ENCODE measurements at regions of chr4 and their contacts with region 1.

Region 1: GRCh38 chr4:78056265-78057129 is 626 bp upstream of the FRAS1 start:
- DNase-seq: peak; percentile 70 to 76
- H3K4me3 ChIP-seq: peak overlapping the region; percentile 70
- H3K4me3 Mint-ChIP-seq: peak overlapping the region; percentile 88
- H3K27ac Mint-ChIP-seq: peak overlapping the region; percentile 87
- H3K4me1 ChIP-seq: no peaks in the 10 kb centered on the region; the same call in 1 of the 2 replicates
- H3K4me1 Mint-ChIP-seq: peaks cover 4% of the 10 kb centered on the region
- H3K27me3 ChIP-seq: no peaks in the 10 kb centered on the region
- H3K27me3 Mint-ChIP-seq: no peaks in the 10 kb centered on the region
- CTCF ChIP-seq: peak in 1 of 2 experiments; percentile 19

Region 2: DNA sequence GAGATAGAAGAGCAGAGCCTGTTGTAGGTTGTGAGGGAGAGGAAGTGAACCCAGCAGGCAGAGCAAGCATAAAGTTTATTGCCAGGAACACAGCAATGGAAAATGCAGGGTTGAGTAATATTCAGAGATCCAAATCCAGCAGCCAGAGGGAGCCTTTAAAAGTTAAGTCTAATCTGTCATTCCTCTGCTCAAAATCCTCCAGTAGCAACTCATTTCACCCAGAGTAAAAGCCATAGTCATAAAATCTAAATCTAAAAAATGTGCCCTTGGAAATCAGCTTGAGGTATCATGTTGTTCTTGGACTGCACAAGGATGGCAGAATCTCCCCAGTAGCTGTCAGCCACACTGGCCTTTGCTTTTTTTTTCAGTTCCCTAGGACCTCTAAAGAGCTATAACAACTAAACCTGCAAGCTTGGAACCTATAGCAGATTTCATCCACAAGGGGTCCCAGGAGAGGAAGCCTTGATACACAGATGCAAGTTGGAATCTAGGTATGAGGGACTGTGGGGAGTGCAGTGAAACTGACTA is 62.2 kb before region 1 on chr4:
- CTCF ChIA-PET with region 1: interaction called, 18 read pairs
- POLR2A ChIA-PET with region 1: no interaction called
- intact Hi-C with region 1: loop called (anchors 1 kb)
- DNase-seq: peak; percentile 70 to 77
- H3K4me3 ChIP-seq: no peak overlapping the region
- H3K4me3 Mint-ChIP-seq: no peak overlapping the region
- H3K27ac Mint-ChIP-seq: no peak overlapping the region
- H3K4me1 ChIP-seq: peaks cover 5% of the 10 kb centered on the region
- H3K4me1 Mint-ChIP-seq: peaks cover 14% of the 10 kb centered on the region
- H3K27me3 ChIP-seq: no peaks in the 10 kb centered on the region
- H3K27me3 Mint-ChIP-seq: no peaks in the 10 kb centered on the region
- CTCF ChIP-seq: peak; percentile 71

Region 3: GRCh38 chr4:78166637-78167036 is 110.1 kb after region 1 on chr4:
- CTCF ChIA-PET with region 1: interaction called, 10 read pairs
- POLR2A ChIA-PET with region 1: no interaction called
- intact Hi-C with region 1: no loop called
- DNase-seq: no peak
- H3K4me3 ChIP-seq: no peak overlapping the region
- H3K4me3 Mint-ChIP-seq: no peak overlapping the region
- H3K27ac Mint-ChIP-seq: no peak overlapping the region
- H3K4me1 ChIP-seq: 0 out of 2 replicates have a peak, but pooled peaks cover 12% of the 10 kb centered on the region
- H3K4me1 Mint-ChIP-seq: peaks cover 17% of the 10 kb centered on the region
- H3K27me3 ChIP-seq: no peaks in the 10 kb centered on the region
- H3K27me3 Mint-ChIP-seq: no peaks in the 10 kb centered on the region
- CTCF ChIP-seq: no peak

Region 4: GRCh38 chr4:78247536-78248285 is 191.2 kb after region 1 on chr4:
- CTCF ChIA-PET with region 1: no interaction called
- POLR2A ChIA-PET with region 1: no interaction called
- intact Hi-C with region 1: no loop called
- DNase-seq: no peak
- H3K4me3 ChIP-seq: no peak overlapping the region
- H3K4me3 Mint-ChIP-seq: no peak overlapping the region
- H3K27ac Mint-ChIP-seq: no peak overlapping the region
- H3K4me1 ChIP-seq: no peaks in the 10 kb centered on the region
- H3K4me1 Mint-ChIP-seq: peaks cover 13% of the 10 kb centered on the region
- H3K27me3 ChIP-seq: no peaks in the 10 kb centered on the region
- H3K27me3 Mint-ChIP-seq: no peaks in the 10 kb centered on the region
- CTCF ChIP-seq: no peak

Region 5: GRCh38 chr4:78297116-78297800 is 240.8 kb after region 1 on chr4:
- CTCF ChIA-PET with region 1: interaction called, 5 read pairs
- POLR2A ChIA-PET with region 1: no interaction called
- intact Hi-C with region 1: loop called (anchors 5 kb)
- DNase-seq: no peak
- H3K4me3 ChIP-seq: no peak overlapping the region
- H3K4me3 Mint-ChIP-seq: no peak overlapping the region
- H3K27ac Mint-ChIP-seq: no peak overlapping the region
- H3K4me1 ChIP-seq: no peaks in the 10 kb centered on the region
- H3K4me1 Mint-ChIP-seq: peaks cover 13% of the 10 kb centered on the region
- H3K27me3 ChIP-seq: no peaks in the 10 kb centered on the region
- H3K27me3 Mint-ChIP-seq: no peaks in the 10 kb centered on the region
- CTCF ChIP-seq: no peak

Region 6: GRCh38 chr4:78369679-78370078 is 313.2 kb after region 1 on chr4:
- CTCF ChIA-PET with region 1: no interaction called
- POLR2A ChIA-PET with region 1: no interaction called
- intact Hi-C with region 1: loop called (anchors 2 kb)
- DNase-seq: no peak
- H3K4me3 ChIP-seq: no peak overlapping the region
- H3K4me3 Mint-ChIP-seq: no peak overlapping the region
- H3K27ac Mint-ChIP-seq: no peak overlapping the region
- H3K4me1 ChIP-seq: peaks cover 20% of the 10 kb centered on the region
- H3K4me1 Mint-ChIP-seq: no peaks in the 10 kb centered on the region
- H3K27me3 ChIP-seq: no peaks in the 10 kb centered on the region
- H3K27me3 Mint-ChIP-seq: no peaks in the 10 kb centered on the region
- CTCF ChIP-seq: no peak

Region 7: DNA sequence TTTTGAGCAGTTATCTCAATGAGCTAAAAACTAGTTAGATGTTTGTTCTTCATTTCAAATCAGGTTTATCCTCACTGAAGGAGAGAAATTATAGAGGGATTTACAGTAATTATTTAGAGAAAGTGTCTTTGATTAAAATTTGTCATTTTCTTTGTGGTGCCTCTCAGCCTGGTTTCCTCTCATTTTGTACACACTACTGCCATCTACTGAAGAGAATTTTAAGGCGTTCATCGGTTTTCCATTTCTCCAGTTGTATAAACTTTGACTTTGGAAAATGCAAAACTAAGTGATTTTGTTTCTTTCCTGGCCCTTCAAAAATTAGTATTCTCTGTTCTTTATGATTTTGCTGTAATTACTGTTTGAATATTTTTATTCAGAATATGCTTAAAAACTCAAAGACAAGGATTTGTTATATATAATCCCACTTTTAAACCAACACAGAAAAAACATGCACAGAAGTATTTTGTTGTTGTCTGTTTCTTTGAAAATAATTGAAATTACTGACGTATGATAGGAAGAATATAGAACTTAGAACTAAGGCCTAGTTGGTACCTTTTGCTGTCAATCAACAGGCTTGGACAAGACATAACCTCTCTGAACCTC is 460.7 kb after region 1 on chr4:
- CTCF ChIA-PET with region 1: interaction called, 6 read pairs
- POLR2A ChIA-PET with region 1: interaction called, 4 read pairs
- intact Hi-C with region 1: loop called (anchors 1 kb)
- DNase-seq: peak in 1 of 2 experiments; percentile 37
- H3K4me3 ChIP-seq: no peak overlapping the region
- H3K4me3 Mint-ChIP-seq: no peak overlapping the region
- H3K27ac Mint-ChIP-seq: no peak overlapping the region
- H3K4me1 ChIP-seq: peaks cover 11% of the 10 kb centered on the region
- H3K4me1 Mint-ChIP-seq: peaks cover 11% of the 10 kb centered on the region
- H3K27me3 ChIP-seq: no peaks in the 10 kb centered on the region
- H3K27me3 Mint-ChIP-seq: no peaks in the 10 kb centered on the region
- CTCF ChIP-seq: peak; percentile 54 to 55

Measured in Caco-2 (cell line).